ENCODE measurements at regions of chr2 and their contacts with region 1.

Region 1: GRCh38 chr2:179454443-179455171 is 190.0 kb upstream of the SESTD1 start:
- DNase-seq: peak; percentile 40 to 73
- H3K4me3 ChIP-seq: no peak overlapping the region
- H3K27ac ChIP-seq: no peak overlapping the region
- H3K4me1 ChIP-seq: no peaks in the 10 kb centered on the region; the same call in 1 of the 2 replicates
- H3K27me3 ChIP-seq: no peaks in the 10 kb centered on the region
- CTCF ChIP-seq: no peak

Region 2: GRCh38 chr2:179612108-179612507 is 157.5 kb after region 1 on chr2:
- CTCF ChIA-PET with region 1: no interaction called
- POLR2A ChIA-PET with region 1: no interaction called
- intact Hi-C with region 1: loop called (anchors 5 kb)
- DNase-seq: no peak
- H3K4me3 ChIP-seq: no peak overlapping the region
- H3K27ac ChIP-seq: no peak overlapping the region
- H3K4me1 ChIP-seq: no peaks in the 10 kb centered on the region
- H3K27me3 ChIP-seq: no peaks in the 10 kb centered on the region
- CTCF ChIP-seq: no peak